Gastrocnemius medialis (tissue), 4 donors: ENCODE measurements at regions of chr6 and their contacts with region 1.

Region 1: GRCh38 chr6:148947621-148948444 is 201.0 kb downstream of the UST start:
- DNase-seq: peak; percentile 36 to 66
- ATAC-seq: peak; percentile 83
- H3K4me3 ChIP-seq: no peak overlapping the region
- H3K27ac ChIP-seq: no peak overlapping the region
- H3K4me1 ChIP-seq: no peaks in the 10 kb centered on the region
- H3K27me3 ChIP-seq: no peaks in the 10 kb centered on the region
- CTCF ChIP-seq: peak; percentile 57 to 88 (median 79)
- POLR2A ChIP-seq: no peak

Region 2: DNA sequence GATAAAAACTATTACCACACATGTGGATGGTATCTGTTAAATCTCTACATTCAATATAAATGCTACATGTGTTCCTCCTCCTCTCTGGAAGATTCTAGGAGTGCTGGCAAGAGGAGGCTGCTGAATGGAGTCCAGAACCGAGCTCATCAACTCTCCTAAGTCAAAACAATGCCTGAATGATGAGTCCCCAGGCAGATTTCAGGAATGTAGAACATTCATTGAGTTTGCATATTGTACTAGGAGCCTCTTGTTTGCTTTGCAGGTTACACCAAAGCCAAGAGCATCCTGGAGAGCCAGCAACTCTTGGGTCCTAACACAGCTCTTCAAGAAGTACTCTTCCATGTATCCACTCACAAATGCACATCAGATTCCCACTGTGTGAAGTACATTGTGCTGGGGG is 318.7 kb before region 1 on chr6:
- in situ Hi-C with region 1: no loop called
- intact Hi-C with region 1: no loop called
- DNase-seq: no peak
- ATAC-seq: peak in 1 of 2 donors; percentile 45
- H3K4me3 ChIP-seq: no peak overlapping the region
- H3K27ac ChIP-seq: no peak overlapping the region
- H3K4me1 ChIP-seq: peaks cover under 1 to 3% of the 10 kb centered on the region in 2 donors
- H3K27me3 ChIP-seq: no peaks in the 10 kb centered on the region
- CTCF ChIP-seq: no peak
- POLR2A ChIP-seq: no peak

Region 3: DNA sequence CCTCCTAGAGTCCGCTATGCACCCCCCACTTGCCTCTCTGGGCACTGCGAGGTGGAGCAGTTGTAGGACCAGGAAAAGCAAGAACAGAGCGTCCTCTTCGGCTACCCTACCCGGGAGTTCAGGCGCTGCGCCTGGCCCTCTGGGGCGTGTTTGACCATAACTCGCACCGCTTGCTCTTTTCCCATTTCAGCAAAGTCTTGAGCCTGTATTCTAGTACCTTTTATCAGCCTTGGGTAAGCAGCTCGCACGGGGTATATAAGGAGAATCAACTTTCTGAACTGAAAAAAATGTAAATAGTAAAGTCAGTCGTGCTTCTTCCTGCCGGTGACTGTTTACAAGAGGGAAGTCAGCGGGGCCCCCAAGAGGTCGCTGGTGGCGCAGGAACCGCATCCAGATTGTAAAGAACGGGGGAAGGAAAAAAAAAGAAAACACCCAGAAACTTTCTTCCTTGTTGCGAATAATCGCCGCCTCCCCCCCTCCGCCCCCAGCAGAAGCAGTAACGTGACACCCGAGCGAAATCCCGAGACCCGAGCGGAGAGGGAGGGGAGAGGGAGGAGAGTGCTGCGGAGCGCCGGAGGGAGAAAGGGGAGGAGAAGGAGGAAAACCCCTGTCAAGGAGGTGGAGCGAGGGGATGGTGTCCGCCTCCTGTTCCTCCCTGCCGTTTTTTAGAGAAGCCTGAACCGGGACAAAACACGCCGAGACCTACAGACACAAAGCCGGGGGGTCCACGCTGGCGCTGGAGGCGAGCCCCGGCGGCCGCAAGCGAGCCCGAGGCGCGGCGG is 201.3 kb before region 1 on chr6 and contains the start of gene UST:
- in situ Hi-C with region 1: loop called in 1 of 4 experiments (anchors 10 kb)
- intact Hi-C with region 1: loop called (anchors 1 kb)
- DNase-seq: peak; percentile 77 to 78
- ATAC-seq: peak; percentile 75 to 84
- H3K4me3 ChIP-seq: peak within 1 kb of the TSS; percentile 68 to 80 (median 71)
- H3K27ac ChIP-seq: peak within 1 kb of the TSS; percentile 68 to 79 (median 72)
- H3K4me1 ChIP-seq: peaks cover 0 to 16% of the 10 kb centered on the region in 2 donors
- H3K27me3 ChIP-seq: peaks cover 4 to 6% (median 5%) of the 10 kb centered on the region in 3 donors
- CTCF ChIP-seq: no peak
- POLR2A ChIP-seq: peak; percentile 20 to 70
- total RNA-seq, gene UST: 2.3 to 8.4 (median 2.8) TPM